GM10248 (cell line): ENCODE measurements at regions of chr3 and their contacts with region 1.

Region 1: DNA sequence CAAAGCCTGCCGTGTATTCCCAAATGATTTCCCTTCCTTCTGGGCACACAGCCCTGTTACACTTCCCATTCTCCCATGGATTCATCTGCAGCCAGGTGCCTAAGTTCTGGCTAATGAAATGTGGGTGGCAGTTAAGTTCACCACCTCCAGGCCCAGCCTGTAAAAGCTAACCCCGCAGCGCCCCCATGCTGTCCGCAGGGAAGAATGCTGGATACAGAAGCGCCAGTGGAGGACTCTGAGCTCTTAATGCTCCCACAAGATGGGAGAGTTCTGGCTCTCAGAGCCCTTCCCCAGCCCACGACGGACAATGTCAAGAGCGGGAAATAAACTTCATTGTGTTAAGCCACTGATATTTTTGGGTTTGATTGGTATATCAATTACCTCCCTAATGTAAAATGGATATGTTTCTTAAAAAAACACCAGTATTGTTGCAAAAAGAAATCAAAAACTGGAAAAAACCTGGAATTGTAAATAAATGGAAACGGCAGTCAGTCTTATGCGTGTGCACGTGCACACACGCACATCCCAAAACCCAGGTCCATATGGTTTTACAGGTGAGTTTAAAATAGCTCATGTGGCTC is 37.7 kb upstream of the FGD5 start:
- DNase-seq: peak; percentile 82
- CTCF ChIP-seq: peak; percentile 88

Region 2: GRCh38 chr3:14203521-14204079 is 577.4 kb before region 1 on chr3:
- CTCF ChIA-PET with region 1: interaction called, 10 read pairs
- POLR2A ChIA-PET with region 1: no interaction called
- DNase-seq: peak; percentile 76
- CTCF ChIP-seq: peak; percentile 82

Region 3: GRCh38 chr3:14633819-14634424 is 147.1 kb before region 1 on chr3:
- CTCF ChIA-PET with region 1: interaction called, 42 read pairs
- POLR2A ChIA-PET with region 1: no interaction called
- DNase-seq: peak; percentile 70
- CTCF ChIP-seq: peak; percentile 75

Region 4: GRCh38 chr3:14680716-14681115 is 100.3 kb before region 1 on chr3:
- CTCF ChIA-PET with region 1: interaction called, 233 read pairs
- POLR2A ChIA-PET with region 1: no interaction called
- DNase-seq: no peak
- CTCF ChIP-seq: no peak

Region 5: GRCh38 chr3:14725564-14726440 is 55.2 kb before region 1 on chr3:
- CTCF ChIA-PET with region 1: no interaction called
- POLR2A ChIA-PET with region 1: no interaction called
- DNase-seq: no peak
- CTCF ChIP-seq: no peak

Region 6: GRCh38 chr3:14761118-14761672 is 19.8 kb before region 1 on chr3:
- CTCF ChIA-PET with region 1: interaction called, 73 read pairs
- POLR2A ChIA-PET with region 1: no interaction called
- DNase-seq: peak; percentile 35
- CTCF ChIP-seq: no peak

Region 7: GRCh38 chr3:14921078-14921616 is 140.1 kb after region 1 on chr3:
- CTCF ChIA-PET with region 1: interaction called, 22 read pairs
- POLR2A ChIA-PET with region 1: no interaction called
- DNase-seq: peak; percentile 83
- CTCF ChIP-seq: peak; percentile 88